ENCODE measurements at regions of chr5 and their contacts with region 1.

Region 1: GRCh38 chr5:68097066-68097465 is 118.5 kb upstream of the PIK3R1 start:
- DNase-seq: no peak
- H3K4me3 ChIP-seq: no peak overlapping the region
- H3K4me3 Mint-ChIP-seq: no peak overlapping the region
- H3K27ac ChIP-seq: no peak overlapping the region
- H3K27ac Mint-ChIP-seq: no peak overlapping the region
- H3K4me1 ChIP-seq: no peaks in the 10 kb centered on the region
- H3K4me1 Mint-ChIP-seq: no peaks in the 10 kb centered on the region
- H3K27me3 ChIP-seq: no peaks in the 10 kb centered on the region
- H3K27me3 Mint-ChIP-seq: peaks cover 1 to 5% of the 10 kb centered on the region in 2 donors

Region 2: DNA sequence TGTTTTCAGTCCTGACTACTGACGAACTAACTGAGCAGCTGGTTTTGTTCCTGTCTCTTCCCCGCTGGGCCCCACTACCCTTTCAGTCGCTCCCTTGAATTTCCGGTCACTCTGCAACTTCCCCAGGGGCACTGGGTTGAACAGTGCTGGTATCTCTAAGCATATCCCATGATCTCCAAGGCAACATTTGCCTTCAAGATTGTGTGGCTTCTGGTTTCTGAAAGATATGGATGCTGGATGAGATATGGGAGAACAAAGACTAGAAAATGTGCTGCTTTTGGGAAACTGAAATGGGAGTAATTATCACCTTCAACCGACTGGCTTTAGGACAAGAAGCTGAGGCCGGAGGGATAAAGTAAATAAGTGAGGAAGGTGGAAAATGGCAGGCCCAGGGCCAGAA is 139.7 kb before region 1 on chr5:
- CTCF ChIA-PET with region 1: no interaction called
- POLR2A ChIA-PET with region 1: no interaction called
- intact Hi-C with region 1: no loop called
- DNase-seq: no peak
- H3K4me3 ChIP-seq: no peak overlapping the region
- H3K4me3 Mint-ChIP-seq: no peak overlapping the region
- H3K27ac ChIP-seq: no peak overlapping the region
- H3K27ac Mint-ChIP-seq: no peak overlapping the region
- H3K4me1 ChIP-seq: no peaks in the 10 kb centered on the region
- H3K4me1 Mint-ChIP-seq: no peaks in the 10 kb centered on the region
- H3K27me3 ChIP-seq: no peaks in the 10 kb centered on the region
- H3K27me3 Mint-ChIP-seq: peaks cover 6 to 13% of the 10 kb centered on the region in 2 donors

Region 3: GRCh38 chr5:68070591-68071281 is 26.3 kb before region 1 on chr5:
- CTCF ChIA-PET with region 1: no interaction called
- POLR2A ChIA-PET with region 1: no interaction called
- intact Hi-C with region 1: loop called (anchors 2 kb)
- DNase-seq: no peak
- H3K4me3 ChIP-seq: no peak overlapping the region
- H3K4me3 Mint-ChIP-seq: no peak overlapping the region
- H3K27ac ChIP-seq: no peak overlapping the region
- H3K27ac Mint-ChIP-seq: no peak overlapping the region
- H3K4me1 ChIP-seq: no peaks in the 10 kb centered on the region
- H3K4me1 Mint-ChIP-seq: peaks cover 0 to 4% (median 3%) of the 10 kb centered on the region in 4 donors
- H3K27me3 ChIP-seq: no peaks in the 10 kb centered on the region
- H3K27me3 Mint-ChIP-seq: peaks cover 0 to under 1% of the 10 kb centered on the region in 2 donors